Activated CD8-positive, alpha-beta memory T cell treated with anti-CD3 and anti-CD28 coated beads, Interleukin-2, amount 10 ng/mL, durations not matched to agents 7 days and 5 days (primary cell): ENCODE measurements at regions of chr1 and their contacts with region 1.

Region 1: GRCh38 chr1:226407497-226408284 is at the start of gene PARP1:
- DNase-seq: peak; percentile 92
- ATAC-seq: peak; percentile 89
- H3K4me3 Mint-ChIP-seq: peak within 1 kb of the TSS; percentile 99
- H3K27ac Mint-ChIP-seq: peak within 1 kb of the TSS; percentile 97
- H3K4me1 Mint-ChIP-seq: peaks cover 31% of the 10 kb centered on the region
- H3K27me3 Mint-ChIP-seq: peaks cover 7% of the 10 kb centered on the region
- total RNA-seq, gene PARP1: 185 to 207 TPM

Region 2: DNA sequence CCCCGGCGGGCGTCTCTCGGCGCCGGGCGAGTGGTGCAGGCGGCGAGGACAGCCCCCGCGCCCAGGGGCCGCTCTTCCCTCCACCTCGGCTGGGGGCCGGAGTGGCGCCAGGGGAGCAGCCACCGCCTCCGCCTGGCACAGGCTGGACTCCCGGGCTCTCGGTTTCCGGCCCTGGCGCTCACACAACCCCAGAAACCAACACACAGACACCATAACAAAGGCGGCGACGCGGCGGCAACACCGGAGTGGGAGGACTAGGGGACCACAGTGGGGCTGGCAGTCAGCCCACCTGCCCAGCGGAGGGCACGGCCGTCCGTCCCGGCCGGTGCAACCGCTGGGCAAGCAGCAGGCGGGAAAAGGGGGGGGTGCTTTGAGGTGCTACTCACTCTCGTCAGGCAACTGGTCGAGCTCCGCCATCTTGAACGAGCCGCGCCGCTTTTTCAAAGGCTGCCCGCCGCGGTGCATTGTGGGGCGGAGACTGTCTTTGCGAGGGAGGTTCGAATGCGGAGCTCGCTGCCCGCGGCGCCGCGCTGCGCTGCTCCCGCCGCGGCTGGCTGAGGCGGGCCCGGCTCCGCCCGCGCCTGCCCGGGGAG is 98.9 kb before region 1 on chr1 and contains the start of gene LIN9:
- CTCF ChIA-PET with region 1: interaction called, 14 read pairs
- DNase-seq: peak; percentile 96
- ATAC-seq: peak; percentile 87
- H3K4me3 Mint-ChIP-seq: peak within 1 kb of the TSS; percentile 88
- H3K27ac Mint-ChIP-seq: peak within 1 kb of the TSS; percentile 88
- H3K4me1 Mint-ChIP-seq: peaks cover 27% of the 10 kb centered on the region
- H3K27me3 Mint-ChIP-seq: peaks cover 21% of the 10 kb centered on the region
- total RNA-seq, gene LIN9: 10.8 to 14.3 TPM

Region 3: DNA sequence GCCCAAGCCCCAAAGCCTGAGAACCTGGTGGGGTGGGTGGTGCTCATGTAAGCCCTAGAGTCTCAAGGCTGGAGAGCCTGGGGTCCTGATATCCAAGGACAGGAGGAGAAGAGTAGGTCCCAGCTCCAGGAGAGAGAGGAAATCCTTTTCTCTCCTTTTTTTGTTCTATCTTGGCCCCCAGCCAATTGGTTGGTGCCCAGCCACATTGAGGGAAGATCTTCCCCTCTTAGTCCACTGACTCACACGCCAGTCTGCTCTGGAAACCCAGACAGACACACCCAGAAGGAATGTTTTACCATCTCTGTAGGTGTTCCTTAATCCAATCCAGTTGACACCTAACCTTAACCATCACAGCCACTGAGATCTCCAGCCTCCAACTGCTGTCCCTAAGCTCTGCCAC is 82.5 kb before region 1 on chr1:
- CTCF ChIA-PET with region 1: no interaction called
- DNase-seq: no peak
- ATAC-seq: no peak
- H3K4me3 Mint-ChIP-seq: no peak overlapping the region
- H3K27ac Mint-ChIP-seq: no peak overlapping the region
- H3K4me1 Mint-ChIP-seq: peaks cover 8% of the 10 kb centered on the region
- H3K27me3 Mint-ChIP-seq: peaks cover 27% of the 10 kb centered on the region

Region 4: GRCh38 chr1:226424228-226425003 is 16.7 kb after region 1 on chr1:
- CTCF ChIA-PET with region 1: interaction called, 76 read pairs
- DNase-seq: no peak
- ATAC-seq: peak; percentile 73
- H3K4me3 Mint-ChIP-seq: no peak overlapping the region
- H3K27ac Mint-ChIP-seq: no peak overlapping the region
- H3K4me1 Mint-ChIP-seq: peaks cover 8% of the 10 kb centered on the region
- H3K27me3 Mint-ChIP-seq: peaks cover 8% of the 10 kb centered on the region

Region 5: DNA sequence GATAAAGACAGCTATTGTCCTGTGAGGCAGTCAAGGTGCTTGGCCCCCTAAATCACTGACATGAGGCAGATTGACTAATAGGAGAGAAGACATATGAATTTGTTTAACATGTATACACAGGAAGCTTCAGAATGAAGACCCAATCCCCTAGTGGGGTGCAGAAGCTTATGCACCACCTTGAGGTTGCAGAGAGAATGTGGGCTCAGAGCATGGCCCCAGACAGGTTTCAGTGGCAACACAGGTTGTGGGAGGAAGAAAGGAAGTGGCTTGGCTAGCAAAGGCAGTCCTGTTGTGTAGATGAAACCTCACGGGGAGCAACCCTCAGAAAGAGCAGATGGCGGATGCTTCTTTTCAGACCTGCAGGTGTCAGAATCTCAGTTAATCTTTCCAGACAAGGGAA is 37.2 kb after region 1 on chr1:
- CTCF ChIA-PET with region 1: interaction called, 40 read pairs
- DNase-seq: peak; percentile 93
- ATAC-seq: peak; percentile 97
- H3K4me3 Mint-ChIP-seq: peak overlapping the region; percentile 23
- H3K27ac Mint-ChIP-seq: peak overlapping the region; percentile 76
- H3K4me1 Mint-ChIP-seq: peaks cover 30% of the 10 kb centered on the region
- H3K27me3 Mint-ChIP-seq: peaks cover 49% of the 10 kb centered on the region

Region 6: DNA sequence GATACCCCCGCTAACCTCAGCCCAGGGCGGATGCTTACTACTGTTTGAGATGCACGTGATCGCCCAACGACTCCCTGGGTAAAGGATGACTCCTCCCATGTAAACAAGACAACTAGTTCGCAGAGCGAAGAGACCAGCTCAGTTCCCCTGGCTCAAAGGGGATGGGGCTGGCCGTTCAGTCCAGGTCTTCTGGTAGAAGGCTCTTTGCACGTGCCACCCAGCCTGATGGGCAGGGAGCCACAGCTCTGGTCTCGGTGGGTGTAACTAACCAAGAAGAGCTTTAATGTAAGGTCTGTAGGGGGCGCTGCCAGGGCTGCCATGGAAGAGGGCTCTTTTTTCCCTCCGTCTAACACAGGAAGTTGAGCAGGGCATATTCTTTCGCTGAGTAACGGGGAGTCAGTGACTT is 49.6 kb after region 1 on chr1:
- CTCF ChIA-PET with region 1: interaction called, 14 read pairs
- DNase-seq: peak; percentile 75
- ATAC-seq: peak; percentile 92
- H3K4me3 Mint-ChIP-seq: peak overlapping the region; percentile 69
- H3K27ac Mint-ChIP-seq: peak overlapping the region; percentile 87
- H3K4me1 Mint-ChIP-seq: peaks cover 11% of the 10 kb centered on the region
- H3K27me3 Mint-ChIP-seq: peaks cover 2% of the 10 kb centered on the region

Region 7: DNA sequence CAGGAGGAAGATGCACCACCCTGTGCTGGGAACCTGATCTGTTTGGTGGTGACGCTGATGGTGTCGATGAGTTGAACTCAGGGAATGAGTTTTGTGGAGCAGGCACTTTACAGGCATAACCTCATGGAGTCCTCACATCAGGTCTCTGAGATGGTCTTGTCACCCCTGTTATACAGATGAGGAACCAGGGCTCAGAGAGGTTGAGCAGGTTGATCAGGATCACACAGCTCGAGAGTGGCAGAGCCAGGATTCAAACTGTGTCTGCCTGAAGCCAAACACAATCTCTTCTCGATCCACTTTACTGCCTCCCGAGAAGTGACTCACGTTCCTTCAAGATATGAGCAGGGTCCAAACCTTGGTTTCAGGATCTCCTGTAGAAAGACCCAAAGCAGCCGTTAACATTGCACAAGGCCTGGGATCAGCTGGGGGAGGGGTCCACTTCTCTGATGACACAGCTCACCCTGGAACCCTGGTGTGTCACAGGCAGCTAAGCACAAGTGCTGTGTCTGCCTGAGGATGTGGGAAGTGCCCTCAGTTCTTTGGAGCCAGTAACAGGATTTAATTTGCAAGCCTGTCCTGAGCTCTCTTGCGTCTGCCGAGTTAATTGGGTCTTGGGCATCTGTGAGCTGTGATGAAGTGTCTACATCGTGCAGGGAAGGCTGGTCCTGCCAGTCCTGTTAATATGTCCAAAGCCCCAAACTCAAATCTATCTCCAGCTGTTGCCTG is 75.4 kb after region 1 on chr1:
- CTCF ChIA-PET with region 1: no interaction called
- DNase-seq: no peak
- ATAC-seq: no peak
- H3K4me3 Mint-ChIP-seq: no peak overlapping the region
- H3K27ac Mint-ChIP-seq: no peak overlapping the region
- H3K4me1 Mint-ChIP-seq: no peaks in the 10 kb centered on the region
- H3K27me3 Mint-ChIP-seq: peaks cover 59% of the 10 kb centered on the region

Region 8: DNA sequence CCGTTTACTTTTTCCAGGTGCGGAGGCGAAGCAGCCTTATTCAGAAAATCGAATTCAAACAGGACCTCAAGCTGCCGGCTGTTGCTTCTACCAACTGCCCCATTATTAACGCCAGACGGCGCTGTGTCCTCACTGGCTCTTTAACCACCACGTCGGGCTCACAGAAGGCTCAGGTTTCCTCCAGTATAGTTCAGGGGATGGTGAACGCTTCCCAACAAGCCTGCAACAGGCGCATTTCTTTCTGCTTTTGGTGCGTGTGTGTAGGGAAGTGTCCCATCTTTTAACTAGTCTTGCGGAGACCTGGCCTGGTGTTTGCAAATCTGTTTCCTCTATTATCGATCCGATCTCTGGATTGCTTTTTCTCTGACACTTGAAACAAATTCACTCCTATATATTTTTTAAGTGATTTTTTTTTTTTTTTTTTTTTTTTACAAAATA is 140.1 kb after region 1 on chr1:
- CTCF ChIA-PET with region 1: interaction called, 11 read pairs
- DNase-seq: peak; percentile 71
- ATAC-seq: peak; percentile 48
- H3K4me3 Mint-ChIP-seq: no peak overlapping the region
- H3K27ac Mint-ChIP-seq: no peak overlapping the region
- H3K4me1 Mint-ChIP-seq: peaks cover 10% of the 10 kb centered on the region
- H3K27me3 Mint-ChIP-seq: peaks cover 74% of the 10 kb centered on the region